Pancreas (tissue), 10 donors: ENCODE measurements at regions of chr1 and their contacts with region 1.

Region 1: GRCh38 chr1:16055613-16056520 is 12.3 kb downstream of the CLCNKB start:
- DNase-seq: peak; percentile 83 to 96 (median 93)
- ATAC-seq: peak; percentile 83 to 95 (median 94)
- H3K4me3 ChIP-seq: no peak overlapping the region
- H3K27ac ChIP-seq: no peak overlapping the region
- H3K4me1 ChIP-seq: no peaks in the 10 kb centered on the region
- H3K27me3 ChIP-seq: no peaks in the 10 kb centered on the region
- CTCF ChIP-seq: peak; percentile 84 to 95 (median 92)

Region 2: GRCh38 chr1:16009030-16009709 is 46.7 kb before region 1 on chr1:
- intact Hi-C with region 1: loop called in 2 of 3 experiments (anchors 5 kb)
- DNase-seq: peak; percentile 64 to 94 (median 86)
- ATAC-seq: peak; percentile 46 to 68 (median 61)
- H3K4me3 ChIP-seq: no peak overlapping the region
- H3K27ac ChIP-seq: no peak overlapping the region
- H3K4me1 ChIP-seq: peaks cover 0 to 7% (median 0%) of the 10 kb centered on the region in 3 donors
- H3K27me3 ChIP-seq: no peaks in the 10 kb centered on the region
- CTCF ChIP-seq: peak; percentile 90 to 96 (median 94)